Caco-2 (cell line): ENCODE measurements at regions of chr5 and their contacts with region 1.

Region 1: DNA sequence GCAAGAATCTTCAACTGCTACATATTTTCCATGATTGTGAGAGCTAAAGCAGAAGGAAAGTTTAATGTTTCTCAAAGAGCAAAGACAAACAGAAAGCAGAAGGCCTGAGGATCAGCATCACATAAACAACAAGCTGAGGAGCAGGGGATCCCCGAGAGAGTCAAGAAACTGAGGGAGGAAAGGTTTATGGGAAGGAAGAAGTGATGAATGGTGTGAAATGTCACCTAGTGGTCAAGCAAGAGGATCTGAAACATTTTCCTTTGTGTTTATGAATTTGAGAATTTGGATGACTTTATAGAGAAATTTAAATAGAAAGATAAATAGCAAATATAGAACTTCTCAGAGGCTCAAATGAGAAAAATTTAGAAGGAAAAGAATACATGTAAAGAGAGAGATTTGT is 481.9 kb downstream of the CHSY3 start:
- DNase-seq: no peak
- H3K4me3 ChIP-seq: no peak overlapping the region
- H3K4me3 Mint-ChIP-seq: no peak overlapping the region
- H3K27ac Mint-ChIP-seq: no peak overlapping the region
- H3K4me1 ChIP-seq: no peaks in the 10 kb centered on the region; the same call in 1 of the 2 replicates
- H3K4me1 Mint-ChIP-seq: no peaks in the 10 kb centered on the region
- H3K27me3 ChIP-seq: no peaks in the 10 kb centered on the region
- H3K27me3 Mint-ChIP-seq: no peaks in the 10 kb centered on the region
- CTCF ChIP-seq: no peak

Region 2: GRCh38 chr5:130365956-130366355 is 20.2 kb before region 1 on chr5:
- CTCF ChIA-PET with region 1: no interaction called
- POLR2A ChIA-PET with region 1: no interaction called
- intact Hi-C with region 1: no loop called
- DNase-seq: no peak
- H3K4me3 ChIP-seq: no peak overlapping the region
- H3K4me3 Mint-ChIP-seq: no peak overlapping the region
- H3K27ac Mint-ChIP-seq: no peak overlapping the region
- H3K4me1 ChIP-seq: 0 out of 2 replicates have a peak, but pooled peaks cover 4% of the 10 kb centered on the region
- H3K4me1 Mint-ChIP-seq: no peaks in the 10 kb centered on the region
- H3K27me3 ChIP-seq: no peaks in the 10 kb centered on the region
- H3K27me3 Mint-ChIP-seq: no peaks in the 10 kb centered on the region
- CTCF ChIP-seq: no peak

Region 3: GRCh38 chr5:130476325-130476724 is 90.2 kb after region 1 on chr5:
- CTCF ChIA-PET with region 1: no interaction called
- POLR2A ChIA-PET with region 1: no interaction called
- intact Hi-C with region 1: loop called (anchors 1 kb)
- DNase-seq: peak; percentile 28 to 62
- H3K4me3 ChIP-seq: no peak overlapping the region
- H3K4me3 Mint-ChIP-seq: no peak overlapping the region
- H3K27ac Mint-ChIP-seq: peak overlapping the region; percentile 76
- H3K4me1 ChIP-seq: peaks cover 12% of the 10 kb centered on the region
- H3K4me1 Mint-ChIP-seq: peaks cover 11% of the 10 kb centered on the region
- H3K27me3 ChIP-seq: no peaks in the 10 kb centered on the region
- H3K27me3 Mint-ChIP-seq: no peaks in the 10 kb centered on the region
- CTCF ChIP-seq: no peak